Activated T-helper 2 cell treated with anti-CD3 and anti-CD28 coated beads, Interferon-gamma antibody, Interleukin-2, Interleukin-4, amounts not matched to agents 10 μg/mL and 5 μg/mL and 100 μg/mL, durations not matched to agents 14 hours and 24 hours and 36 hours (primary cell): ENCODE measurements at regions of chr6 and their contacts with region 1.

Region 1: DNA sequence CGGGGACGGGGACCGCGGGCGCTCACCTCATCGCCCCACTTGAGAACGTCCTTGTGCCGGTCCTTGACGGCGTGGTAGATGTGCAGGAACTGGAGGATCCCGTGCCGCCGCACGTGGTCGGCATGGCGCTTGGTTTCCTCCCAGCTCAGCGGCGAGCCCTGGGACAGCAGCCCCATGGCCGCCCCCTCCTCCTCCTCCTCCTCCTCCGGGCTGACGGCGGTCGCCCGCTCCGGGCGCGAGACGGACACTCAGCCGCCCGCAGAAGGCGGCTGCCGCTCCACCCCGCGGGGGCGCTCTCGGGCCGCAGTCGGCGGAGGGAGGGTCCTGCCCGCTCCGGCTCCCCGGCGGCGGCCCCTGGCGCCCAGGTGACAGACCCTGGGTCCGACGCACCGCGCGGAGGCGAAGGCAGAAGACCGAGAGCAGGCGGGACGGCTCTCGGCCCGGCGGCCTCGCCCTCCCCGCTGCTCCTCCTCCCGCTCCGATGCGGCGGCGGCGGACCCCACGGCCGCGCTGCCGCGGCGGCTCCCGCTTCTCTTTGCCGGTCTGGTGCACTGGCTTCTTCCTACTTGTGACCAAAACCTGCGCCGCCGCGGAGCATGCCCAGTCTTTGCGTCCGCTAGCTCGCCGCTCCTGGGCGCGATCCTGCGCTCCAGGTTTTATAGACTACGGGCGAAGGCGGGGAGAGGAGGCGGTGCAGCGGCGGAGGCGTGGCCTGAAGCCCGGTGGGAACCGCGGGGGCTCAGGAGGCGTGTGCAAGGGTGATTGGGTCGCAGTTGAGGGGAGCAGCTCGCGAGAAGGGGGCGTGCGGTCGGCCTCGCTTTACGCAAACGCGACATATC is at the start of gene GCLC:
- DNase-seq: peak; percentile 88
- H3K4me3 Mint-ChIP-seq: peak within 1 kb of the TSS; percentile 91
- H3K27ac Mint-ChIP-seq: peak within 1 kb of the TSS; percentile 96
- H3K4me1 Mint-ChIP-seq: peaks cover 53% of the 10 kb centered on the region
- H3K27me3 Mint-ChIP-seq: peaks cover 8% of the 10 kb centered on the region
- total RNA-seq, gene GCLC: 26.9 and 28.0 TPM in 2 replicates

Region 2: GRCh38 chr6:52984247-52984646 is 560.4 kb before region 1 on chr6:
- intact Hi-C with region 1: loop called (anchors 5 kb)
- DNase-seq: peak; percentile 43
- H3K4me3 Mint-ChIP-seq: peak overlapping the region; percentile 37
- H3K27ac Mint-ChIP-seq: peak overlapping the region; percentile 90
- H3K4me1 Mint-ChIP-seq: peaks cover 73% of the 10 kb centered on the region
- H3K27me3 Mint-ChIP-seq: no peaks in the 10 kb centered on the region

Region 3: DNA sequence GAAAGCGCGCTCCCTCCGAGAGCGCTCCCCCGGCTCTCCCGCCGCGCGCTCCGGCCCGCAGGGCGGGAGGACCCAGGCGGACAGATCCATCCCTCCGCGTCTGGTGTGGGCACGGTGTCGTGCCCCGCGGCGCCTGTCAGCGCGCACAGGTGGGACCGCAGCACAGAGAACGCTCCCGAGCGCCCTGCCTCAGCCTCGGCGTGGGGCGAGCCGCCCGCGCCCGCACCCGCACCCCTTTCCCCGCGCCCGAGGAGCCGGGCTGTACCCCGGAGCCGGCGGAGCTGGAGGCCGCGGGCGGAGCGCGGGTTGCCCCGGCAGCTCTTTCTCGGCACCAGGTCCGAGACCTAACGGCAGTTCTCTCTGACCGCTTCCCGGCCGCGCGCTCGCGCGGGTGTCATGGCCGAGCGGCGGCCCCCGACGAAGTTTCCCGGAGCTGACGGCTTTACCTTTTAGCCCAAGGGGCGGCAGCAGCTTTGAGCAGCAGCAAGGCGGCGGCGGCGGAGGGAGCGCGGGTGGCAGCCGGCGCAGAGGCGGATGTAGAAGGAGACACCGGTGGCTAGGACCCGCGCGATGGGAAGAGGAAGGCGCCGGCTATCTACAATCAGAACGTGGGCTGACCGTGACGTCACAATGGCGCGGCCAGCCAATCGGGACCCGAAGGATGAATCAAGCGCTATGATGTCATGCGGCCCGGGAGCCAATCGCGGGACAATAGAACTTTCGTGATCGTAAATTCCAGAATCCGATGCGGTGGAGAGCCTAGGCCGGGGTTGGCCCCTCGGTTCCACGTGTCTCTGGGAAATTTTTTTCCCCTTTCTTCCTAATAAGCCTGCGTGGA is 196.1 kb before region 1 on chr6 and contains the start of gene ELOVL5:
- intact Hi-C with region 1: loop called (anchors 5 kb)
- DNase-seq: peak; percentile 94
- H3K4me3 Mint-ChIP-seq: peak within 1 kb of the TSS; percentile 93
- H3K27ac Mint-ChIP-seq: peak within 1 kb of the TSS; percentile 93
- H3K4me1 Mint-ChIP-seq: peaks cover 39% of the 10 kb centered on the region
- H3K27me3 Mint-ChIP-seq: peaks cover 16% of the 10 kb centered on the region
- total RNA-seq, gene ELOVL5: 122 and 133 TPM in 2 replicates

Region 4: GRCh38 chr6:53492860-53493634 is 51.6 kb before region 1 on chr6:
- intact Hi-C with region 1: loop called (anchors 1 kb)
- DNase-seq: no peak
- H3K4me3 Mint-ChIP-seq: no peak overlapping the region
- H3K27ac Mint-ChIP-seq: peak overlapping the region; percentile 65
- H3K4me1 Mint-ChIP-seq: peaks cover 21% of the 10 kb centered on the region
- H3K27me3 Mint-ChIP-seq: peaks cover 5% of the 10 kb centered on the region

Region 5: GRCh38 chr6:53623497-53623896 is 78.8 kb after region 1 on chr6:
- intact Hi-C with region 1: no loop called
- DNase-seq: no peak
- H3K4me3 Mint-ChIP-seq: no peak overlapping the region
- H3K27ac Mint-ChIP-seq: no peak overlapping the region
- H3K4me1 Mint-ChIP-seq: no peaks in the 10 kb centered on the region
- H3K27me3 Mint-ChIP-seq: peaks cover 16% of the 10 kb centered on the region

Region 6: DNA sequence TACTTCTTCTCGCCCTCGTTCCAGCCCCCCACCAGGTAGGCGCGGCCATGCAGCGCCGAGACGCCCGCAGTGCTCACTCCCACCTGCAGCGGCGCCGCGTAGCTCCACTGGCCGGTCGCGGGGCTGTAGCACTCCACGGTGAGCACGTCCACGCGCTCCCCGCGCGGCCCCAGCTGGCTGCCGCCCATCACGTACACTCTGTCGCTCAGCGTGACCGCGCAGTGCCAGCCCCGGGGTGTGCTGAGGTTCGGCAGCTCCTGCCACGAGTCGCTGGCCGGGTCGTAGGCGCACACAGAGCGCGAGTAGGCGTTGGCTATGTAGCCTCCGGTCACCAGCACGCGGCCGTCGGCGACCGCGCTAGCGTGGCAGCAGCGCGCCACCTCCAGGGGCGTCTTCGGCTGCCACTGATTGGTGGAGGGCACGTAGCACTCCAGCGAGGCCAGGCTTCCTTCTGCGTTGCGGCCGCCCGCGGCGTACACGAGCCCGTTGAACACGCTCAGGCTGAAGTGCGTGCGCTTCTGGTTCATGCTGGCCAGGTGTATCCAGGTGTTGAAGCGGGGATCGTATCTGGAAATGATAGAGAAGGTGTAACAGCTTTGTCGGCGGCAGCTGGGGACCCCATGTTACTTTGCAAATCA is 107.2 kb after region 1 on chr6:
- intact Hi-C with region 1: loop called (anchors 1 kb)
- DNase-seq: peak; percentile 70
- H3K4me3 Mint-ChIP-seq: peak overlapping the region; percentile 86
- H3K27ac Mint-ChIP-seq: peak overlapping the region; percentile 86
- H3K4me1 Mint-ChIP-seq: peaks cover 30% of the 10 kb centered on the region
- H3K27me3 Mint-ChIP-seq: peaks cover 27% of the 10 kb centered on the region

Region 7: DNA sequence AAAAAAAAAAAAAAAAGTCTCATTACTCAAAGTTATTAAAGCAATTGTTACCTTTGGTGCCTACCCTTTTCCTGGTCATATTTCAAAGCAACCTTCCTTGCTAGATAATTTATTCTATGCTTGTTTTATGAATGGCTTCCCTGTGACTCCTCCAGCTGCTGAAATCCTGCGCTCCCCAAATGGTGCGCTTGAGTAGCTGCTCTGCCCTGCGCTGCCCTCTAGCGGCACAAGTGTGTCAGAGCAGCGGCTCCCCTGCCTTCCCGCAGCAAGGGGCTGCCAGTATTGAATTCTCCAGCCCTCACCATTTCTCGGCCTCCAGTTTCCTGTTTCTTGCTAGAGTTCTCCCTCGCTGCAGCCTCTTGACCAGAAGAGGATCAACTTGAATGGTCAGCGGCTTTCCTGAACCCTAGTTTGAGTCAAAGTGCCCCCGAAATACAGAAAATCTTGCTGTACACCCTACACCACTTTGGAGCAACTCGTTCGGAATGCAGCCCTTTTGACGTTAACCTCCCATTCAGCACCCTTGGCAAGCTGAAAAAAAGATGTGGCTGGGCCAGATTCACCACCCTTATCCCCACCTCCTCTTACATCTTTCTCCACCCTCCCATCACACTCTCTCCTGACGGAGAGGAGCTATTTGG is 181.2 kb after region 1 on chr6:
- intact Hi-C with region 1: loop called (anchors 5 kb)
- DNase-seq: peak; percentile 56
- H3K4me3 Mint-ChIP-seq: no peak overlapping the region
- H3K27ac Mint-ChIP-seq: no peak overlapping the region
- H3K4me1 Mint-ChIP-seq: peaks cover 6% of the 10 kb centered on the region
- H3K27me3 Mint-ChIP-seq: peaks cover 24% of the 10 kb centered on the region

Region 8: DNA sequence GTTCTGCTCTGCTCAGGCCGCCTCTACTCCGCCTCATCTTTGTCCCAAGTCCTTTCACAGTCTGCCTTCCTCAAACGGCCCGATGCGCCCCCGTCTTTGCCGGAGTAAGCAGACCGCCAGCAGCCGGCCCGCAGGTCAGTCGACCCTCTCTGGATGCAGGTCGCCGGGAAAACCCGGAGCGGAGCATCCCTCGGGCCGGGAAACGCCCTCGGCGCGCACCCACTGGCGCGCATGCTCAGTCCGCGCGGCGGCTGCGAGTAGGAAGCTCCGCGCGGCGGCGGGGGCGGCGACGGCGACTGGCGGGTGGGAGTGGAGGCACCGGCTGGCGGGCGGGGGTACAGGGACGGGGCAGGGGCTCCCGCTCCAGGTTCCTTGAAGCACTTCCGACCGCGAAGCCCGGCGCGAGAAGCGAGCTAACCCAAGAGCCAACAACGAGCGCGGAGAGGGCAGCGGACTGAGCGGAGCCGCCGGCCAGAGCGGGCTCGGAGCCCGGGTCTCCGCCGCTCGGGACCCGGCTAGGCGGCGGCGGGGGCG is 250.1 kb after region 1 on chr6 and contains the start of gene LRRC1:
- intact Hi-C with region 1: loop called (anchors 2 kb)
- DNase-seq: peak; percentile 87
- H3K4me3 Mint-ChIP-seq: peak within 1 kb of the TSS; percentile 88
- H3K27ac Mint-ChIP-seq: peak within 1 kb of the TSS; percentile 74
- H3K4me1 Mint-ChIP-seq: peaks cover 25% of the 10 kb centered on the region
- H3K27me3 Mint-ChIP-seq: peaks cover 46% of the 10 kb centered on the region
- total RNA-seq, gene LRRC1: 1.9 and 3.4 TPM in 2 replicates